HEK293 (cell line): ENCODE measurements at regions of chr10 and their contacts with region 1.

Region 1: DNA sequence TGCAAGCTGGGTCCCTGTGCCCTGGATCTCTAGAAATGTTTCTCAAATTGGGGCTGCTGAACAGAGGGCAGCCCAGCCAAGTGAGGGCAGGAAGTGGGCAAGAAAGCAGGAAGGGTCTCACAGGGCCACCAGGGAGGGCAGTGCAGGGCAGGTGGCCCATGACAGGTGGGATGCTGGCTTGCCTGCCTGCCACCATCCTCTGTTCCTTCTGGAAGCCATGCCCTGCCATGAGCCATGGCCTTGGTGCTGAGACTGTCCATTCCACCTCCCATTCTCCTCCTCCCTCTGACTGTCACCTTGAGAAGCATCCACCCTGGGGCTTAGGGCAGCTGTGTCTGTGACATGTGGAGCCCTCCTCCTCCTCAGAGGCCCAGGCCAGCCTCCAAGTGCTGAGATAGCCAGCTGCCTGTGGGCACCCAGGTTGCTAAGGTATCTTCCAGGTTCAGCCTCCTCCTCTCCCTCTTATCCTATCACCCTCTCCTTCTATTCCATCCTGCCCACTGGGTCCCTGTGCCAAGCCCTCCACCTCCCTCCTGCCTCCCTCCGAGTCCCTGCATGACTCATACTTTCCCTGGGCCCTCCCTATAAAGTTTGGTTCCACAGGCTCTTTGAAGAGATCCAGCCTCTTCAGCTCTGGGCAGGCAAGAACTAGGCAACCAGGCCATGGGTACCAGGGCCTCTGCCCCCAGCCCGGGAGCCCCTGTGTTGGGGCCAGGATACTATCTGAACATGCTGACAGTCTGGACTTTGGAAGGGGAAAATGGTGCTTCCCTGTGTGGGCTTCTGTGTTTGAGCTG is 1.3 kb downstream of the VSIR start:
- H3K4me3 ChIP-seq: no peak overlapping the region
- H3K27ac ChIP-seq: no peak overlapping the region
- H3K4me1 ChIP-seq: no peaks in the 10 kb centered on the region; the same call in 1 of the 2 replicates
- CTCF ChIP-seq: no peak

Region 2: GRCh38 chr10:71708301-71708703 is 63.7 kb before region 1 on chr10:
- CTCF ChIA-PET with region 1: interaction called, 10 read pairs
- POLR2A ChIA-PET with region 1: no interaction called
- H3K4me3 ChIP-seq: no peak overlapping the region
- H3K27ac ChIP-seq: no peak overlapping the region
- H3K4me1 ChIP-seq: no peaks in the 10 kb centered on the region
- CTCF ChIP-seq: peak; percentile 78

Region 3: GRCh38 chr10:71805776-71806703 is 34.0 kb after region 1 on chr10:
- CTCF ChIA-PET with region 1: interaction called, 12 read pairs
- POLR2A ChIA-PET with region 1: interaction called, 4 read pairs
- H3K4me3 ChIP-seq: no peak overlapping the region
- H3K27ac ChIP-seq: no peak overlapping the region
- H3K4me1 ChIP-seq: no peaks in the 10 kb centered on the region
- CTCF ChIP-seq: no peak

Region 4: DNA sequence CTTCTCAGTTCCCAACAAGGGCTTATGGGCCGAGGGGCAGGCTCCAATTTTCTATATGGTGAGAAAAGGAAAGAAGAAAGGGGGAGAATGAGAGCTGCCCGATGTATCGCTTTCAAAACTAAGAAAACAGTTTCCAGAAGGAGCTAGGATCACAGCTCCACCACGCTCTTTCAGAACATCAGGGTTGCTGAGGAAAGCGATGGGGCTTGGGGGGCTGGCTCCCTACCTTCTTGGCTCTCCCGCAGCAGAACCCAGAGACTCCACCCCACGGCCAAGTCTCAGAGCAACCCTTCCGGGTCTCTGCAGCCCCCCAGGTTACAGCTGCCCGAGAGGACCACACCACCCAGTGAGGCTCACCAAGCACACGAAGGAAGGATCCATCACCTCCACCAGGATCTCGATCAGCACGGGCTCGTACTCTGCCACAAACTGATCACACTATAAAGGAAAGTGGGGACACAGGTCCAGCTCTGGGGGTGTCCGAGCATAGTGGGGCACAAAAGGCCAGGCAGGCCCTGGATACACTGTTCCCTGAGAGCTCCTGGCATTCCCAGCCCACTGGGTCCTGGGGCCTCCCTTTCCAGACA is 46.7 kb after region 1 on chr10:
- CTCF ChIA-PET with region 1: no interaction called
- POLR2A ChIA-PET with region 1: no interaction called
- H3K4me3 ChIP-seq: no peak overlapping the region
- H3K27ac ChIP-seq: no peak overlapping the region
- H3K4me1 ChIP-seq: no peaks in the 10 kb centered on the region
- CTCF ChIP-seq: no peak

Region 5: DNA sequence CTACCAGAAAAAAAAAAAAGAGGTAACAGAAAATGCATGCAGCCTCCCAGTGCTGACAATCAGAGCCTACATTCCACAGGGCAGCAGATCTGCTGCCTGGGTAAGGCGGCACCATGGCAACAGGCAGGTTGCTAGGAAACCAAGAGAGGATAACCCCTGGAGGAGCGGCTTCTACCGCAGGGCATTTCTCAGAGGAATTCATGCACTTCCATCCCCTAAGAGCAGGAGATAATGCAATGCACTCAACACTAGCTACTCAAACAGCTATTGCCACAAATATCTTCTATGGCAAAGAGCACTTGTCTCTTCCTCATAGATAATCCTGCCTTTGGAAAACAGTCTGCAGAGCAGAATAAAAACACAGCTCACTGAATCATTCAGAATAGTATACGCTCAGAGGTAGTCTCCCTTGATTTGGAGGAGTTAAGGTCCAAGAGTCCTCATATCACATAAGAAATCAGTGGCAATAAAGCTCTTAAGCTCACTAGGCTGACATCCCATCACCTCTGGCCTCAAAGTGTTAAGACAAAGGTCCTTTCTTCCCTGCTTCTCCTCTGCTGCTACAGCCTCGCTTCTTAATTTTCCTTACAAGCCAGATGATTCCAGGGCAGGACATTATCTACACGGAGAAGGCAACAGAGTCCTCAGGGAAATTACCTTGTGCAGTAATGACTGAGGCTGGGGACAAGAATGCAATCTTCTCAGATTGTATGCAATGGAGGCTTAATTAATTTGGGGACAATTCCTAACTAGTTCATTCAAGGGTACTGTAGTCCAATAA is 68.3 kb after region 1 on chr10:
- CTCF ChIA-PET with region 1: no interaction called
- POLR2A ChIA-PET with region 1: no interaction called
- H3K4me3 ChIP-seq: no peak overlapping the region
- H3K27ac ChIP-seq: no peak overlapping the region
- H3K4me1 ChIP-seq: peaks cover 44% of the 10 kb centered on the region
- CTCF ChIP-seq: no peak